IMR-90 (cell line): ENCODE measurements at regions of chr11 and their contacts with region 1.

Region 1: GRCh38 chr11:69497221-69497787 is 15.8 kb downstream of the LINC01488 start:
- DNase-seq: peak; percentile 95
- ATAC-seq: peak; percentile 99
- H3K4me3 ChIP-seq: no peak overlapping the region
- H3K27ac ChIP-seq: peak overlapping the region; percentile 90
- H3K4me1 ChIP-seq: peaks cover 12% of the 10 kb centered on the region
- H3K27me3 ChIP-seq: no peaks in the 10 kb centered on the region
- CTCF ChIP-seq: no peak
- POLR2A ChIP-seq: no peak
- RAD21 ChIP-seq: peak; percentile 31

Region 2: GRCh38 chr11:69101115-69101791 is 396.1 kb before region 1 on chr11:
- CTCF ChIA-PET with region 1: no interaction called
- POLR2A ChIA-PET with region 1: no interaction called
- dilution Hi-C with region 1: no loop called
- in situ Hi-C with region 1: no loop called
- intact Hi-C with region 1: loop called (anchors 1 kb)
- DNase-seq: peak; percentile 73
- ATAC-seq: peak; percentile 94
- H3K4me3 ChIP-seq: no peak overlapping the region
- H3K27ac ChIP-seq: no peak overlapping the region
- H3K4me1 ChIP-seq: peaks cover 3% of the 10 kb centered on the region; the same call in 1 of the 2 replicates
- H3K27me3 ChIP-seq: no peaks in the 10 kb centered on the region
- CTCF ChIP-seq: peak; percentile 97
- POLR2A ChIP-seq: peak; percentile 52; the same call in 1 of the 2 replicates
- RAD21 ChIP-seq: peak; percentile 99

Region 3: DNA sequence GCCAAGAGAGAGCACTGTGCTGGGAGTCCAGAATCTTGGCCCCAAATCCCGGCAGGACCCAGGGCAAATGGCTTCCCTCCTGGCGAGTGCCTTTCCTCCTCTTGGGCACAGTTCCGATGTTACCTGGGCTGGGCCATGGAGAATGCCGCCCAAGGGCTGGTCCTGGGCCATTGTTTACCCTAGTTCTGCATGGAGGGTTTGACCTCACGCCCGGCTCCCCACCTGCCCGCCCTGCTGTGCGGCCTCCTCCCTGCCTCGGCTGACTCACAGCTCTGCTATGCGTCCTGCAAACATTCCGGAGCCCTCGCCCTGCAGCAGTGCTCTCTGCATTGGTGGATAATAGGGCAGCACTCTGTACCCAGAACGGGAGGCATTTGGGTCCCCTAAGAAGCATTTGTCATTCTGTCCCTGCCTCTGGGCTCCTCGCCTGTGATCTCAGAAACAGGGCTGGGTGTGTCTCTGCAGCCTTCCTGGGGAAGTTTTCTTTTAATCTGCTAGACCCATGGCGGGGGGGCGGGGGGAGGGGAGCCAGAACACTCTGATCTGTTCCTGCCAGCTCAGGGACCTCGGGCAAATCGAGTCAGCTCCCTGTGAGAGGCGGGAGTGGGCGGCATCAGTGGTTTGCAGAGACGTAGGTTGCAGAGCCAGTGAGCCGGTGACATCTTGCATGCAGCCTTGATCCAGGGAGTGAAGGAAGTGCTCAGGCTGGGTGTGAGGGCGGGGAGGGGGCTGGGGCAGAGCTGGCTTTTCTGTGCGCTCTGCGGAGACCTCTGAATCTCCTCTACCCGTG is 374.5 kb before region 1 on chr11:
- CTCF ChIA-PET with region 1: no interaction called
- POLR2A ChIA-PET with region 1: no interaction called
- dilution Hi-C with region 1: no loop called
- in situ Hi-C with region 1: no loop called
- intact Hi-C with region 1: loop called (anchors 2 kb)
- DNase-seq: peak; percentile 70
- ATAC-seq: peak; percentile 97
- H3K4me3 ChIP-seq: no peak overlapping the region
- H3K27ac ChIP-seq: peak overlapping the region; percentile 17; the same call in 1 of the 2 replicates
- H3K4me1 ChIP-seq: peaks cover 17% of the 10 kb centered on the region
- H3K27me3 ChIP-seq: no peaks in the 10 kb centered on the region
- CTCF ChIP-seq: no peak
- POLR2A ChIP-seq: no peak
- RAD21 ChIP-seq: no peak

Region 4: DNA sequence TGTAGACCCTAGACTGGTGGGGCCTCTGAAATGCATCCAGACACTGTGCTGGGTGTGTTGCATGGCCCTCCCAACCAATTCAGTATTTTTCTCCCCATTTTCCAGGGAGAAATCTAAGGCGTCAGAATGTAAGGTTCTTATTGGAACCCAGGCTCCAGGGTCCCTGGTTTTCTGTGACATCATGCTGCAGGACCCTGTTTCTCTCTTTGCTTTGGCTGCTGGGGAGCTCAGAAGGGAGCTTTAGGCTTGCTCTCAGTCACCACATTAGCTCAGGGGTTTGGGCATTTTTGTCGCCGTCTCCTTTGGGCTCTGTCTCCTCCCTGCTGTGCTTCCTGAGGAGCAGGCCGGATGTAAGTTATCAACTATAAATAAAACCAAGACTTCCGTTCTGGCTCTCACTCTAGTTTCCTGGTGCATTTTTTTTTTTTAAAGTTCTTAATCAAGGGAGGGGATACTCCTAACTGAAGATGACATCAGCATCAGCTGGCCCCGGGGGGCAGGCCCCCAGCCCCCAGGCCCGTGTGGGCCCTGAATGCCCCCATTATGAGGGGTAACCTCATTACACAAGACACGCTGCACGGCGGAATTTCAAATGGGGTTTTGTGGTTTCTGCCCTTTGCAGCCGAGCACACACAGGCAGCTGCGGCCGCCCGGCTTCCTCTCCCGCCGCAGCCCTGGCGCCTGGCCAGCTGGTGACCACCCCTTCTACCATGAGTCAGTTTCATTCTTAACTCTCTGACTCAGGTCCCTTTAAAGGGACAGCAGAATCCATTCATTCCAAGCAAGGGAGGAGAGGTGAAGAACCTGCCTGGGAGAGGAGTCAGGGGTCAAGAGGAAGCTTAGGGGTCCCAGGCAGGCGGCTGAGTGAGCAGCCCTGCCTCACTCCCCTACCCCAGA is 200.2 kb before region 1 on chr11:
- CTCF ChIA-PET with region 1: no interaction called
- POLR2A ChIA-PET with region 1: no interaction called
- dilution Hi-C with region 1: no loop called
- in situ Hi-C with region 1: no loop called
- intact Hi-C with region 1: loop called (anchors 1 kb)
- DNase-seq: peak; percentile 99
- ATAC-seq: peak; percentile 59
- H3K4me3 ChIP-seq: no peak overlapping the region
- H3K27ac ChIP-seq: peak overlapping the region; percentile 92
- H3K4me1 ChIP-seq: peaks cover 47% of the 10 kb centered on the region
- H3K27me3 ChIP-seq: no peaks in the 10 kb centered on the region
- CTCF ChIP-seq: no peak
- POLR2A ChIP-seq: no peak
- RAD21 ChIP-seq: peak; percentile 33; the same call in 1 of the 2 replicates

Region 5: DNA sequence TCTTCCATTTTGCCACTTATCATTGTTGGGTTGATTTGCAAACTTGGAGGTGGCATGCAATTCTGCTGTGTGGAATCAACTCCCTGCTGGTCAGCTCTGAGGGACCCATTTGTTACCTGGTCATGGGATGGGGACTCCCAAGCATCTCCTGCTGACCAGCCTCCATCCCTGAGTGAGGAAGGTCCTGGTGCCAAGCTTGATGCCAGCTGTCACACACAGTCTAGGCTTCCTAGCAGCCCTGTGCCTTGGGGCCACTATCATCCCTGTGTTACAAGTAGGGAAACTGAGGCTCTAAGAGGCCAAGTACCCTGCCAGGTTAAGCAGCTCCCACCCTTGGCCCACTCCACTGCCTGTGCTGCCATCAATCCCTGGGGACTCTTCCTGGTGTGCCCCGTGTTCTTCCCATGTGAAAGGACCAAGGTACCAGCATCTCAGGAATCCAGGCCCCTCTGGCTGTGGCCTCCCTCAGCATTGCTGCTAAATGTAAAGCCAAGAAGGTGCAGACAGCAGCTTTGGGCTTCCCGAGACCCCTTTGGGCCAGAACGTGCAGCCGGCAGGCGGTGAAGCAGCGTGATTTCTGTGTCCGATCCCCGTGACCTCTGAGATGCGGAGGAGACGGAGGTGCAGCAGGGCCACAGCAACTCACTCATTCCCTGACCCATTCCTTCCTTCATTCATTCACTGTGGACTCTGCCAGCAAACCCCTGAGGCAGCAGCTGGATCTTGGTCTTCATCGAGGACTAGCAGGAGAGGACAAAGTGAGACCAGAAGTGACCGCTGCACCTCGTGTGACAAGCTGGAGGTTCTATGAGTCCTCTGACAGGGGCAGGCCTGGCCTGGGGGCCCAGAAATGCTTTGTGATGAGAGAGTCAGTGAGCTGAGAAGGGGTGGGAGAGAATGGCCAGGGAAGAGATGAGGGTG is 153.6 kb before region 1 on chr11:
- CTCF ChIA-PET with region 1: no interaction called
- POLR2A ChIA-PET with region 1: no interaction called
- dilution Hi-C with region 1: no loop called
- in situ Hi-C with region 1: no loop called
- intact Hi-C with region 1: loop called (anchors 2 kb)
- DNase-seq: no peak
- ATAC-seq: no peak
- H3K4me3 ChIP-seq: no peak overlapping the region
- H3K27ac ChIP-seq: no peak overlapping the region
- H3K4me1 ChIP-seq: peaks cover 2% of the 10 kb centered on the region; the same call in 1 of the 2 replicates
- H3K27me3 ChIP-seq: no peaks in the 10 kb centered on the region
- CTCF ChIP-seq: no peak
- POLR2A ChIP-seq: no peak
- RAD21 ChIP-seq: no peak

Region 6: DNA sequence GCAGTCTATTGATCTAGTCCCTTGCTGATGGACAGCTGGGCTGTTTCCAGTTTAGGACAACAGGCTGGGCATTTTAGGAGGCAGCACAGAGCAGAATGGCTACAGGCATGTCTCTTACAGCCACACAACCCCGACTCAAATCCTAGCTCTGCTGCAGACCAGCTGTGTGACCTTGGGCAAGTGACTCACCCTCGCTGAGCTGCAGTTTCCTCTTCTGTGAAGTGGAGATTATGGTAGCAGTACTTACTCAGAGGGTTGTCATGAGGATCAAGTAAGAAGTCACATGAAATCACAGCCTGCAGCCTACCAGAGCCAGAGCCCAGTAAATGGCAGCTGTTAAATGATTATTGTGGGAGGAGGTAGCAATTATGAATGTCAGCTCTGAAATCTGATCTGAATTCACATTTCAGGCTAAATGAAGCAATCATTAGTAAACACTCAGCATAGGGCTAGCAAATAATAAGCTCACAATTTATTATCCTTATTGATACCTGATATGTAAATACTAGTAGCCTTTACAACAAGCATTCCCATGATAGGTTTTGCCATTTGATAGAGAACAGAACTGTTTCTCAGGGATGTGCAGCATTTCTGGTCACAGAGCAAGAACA is 144.5 kb before region 1 on chr11:
- CTCF ChIA-PET with region 1: no interaction called
- POLR2A ChIA-PET with region 1: no interaction called
- dilution Hi-C with region 1: no loop called
- in situ Hi-C with region 1: no loop called
- intact Hi-C with region 1: loop called (anchors 2 kb)
- DNase-seq: peak; percentile 99
- ATAC-seq: peak; percentile 90
- H3K4me3 ChIP-seq: no peak overlapping the region
- H3K27ac ChIP-seq: peak overlapping the region; percentile 85
- H3K4me1 ChIP-seq: peaks cover 16% of the 10 kb centered on the region
- H3K27me3 ChIP-seq: no peaks in the 10 kb centered on the region
- CTCF ChIP-seq: no peak
- POLR2A ChIP-seq: no peak
- RAD21 ChIP-seq: peak; percentile 36

Region 7: GRCh38 chr11:69443138-69443967 is 54.0 kb before region 1 on chr11:
- CTCF ChIA-PET with region 1: no interaction called
- POLR2A ChIA-PET with region 1: interaction called, 4 read pairs
- dilution Hi-C with region 1: no loop called
- in situ Hi-C with region 1: no loop called
- intact Hi-C with region 1: loop called (anchors 2 kb)
- DNase-seq: peak; percentile 94
- ATAC-seq: peak; percentile 93
- H3K4me3 ChIP-seq: peak overlapping the region; percentile 36
- H3K27ac ChIP-seq: peak overlapping the region; percentile 95
- H3K4me1 ChIP-seq: peaks cover 27% of the 10 kb centered on the region
- H3K27me3 ChIP-seq: no peaks in the 10 kb centered on the region
- CTCF ChIP-seq: no peak
- POLR2A ChIP-seq: peak; percentile 84
- RAD21 ChIP-seq: no peak; the same call in 1 of the 2 replicates